ENCODE measurements at regions of chr17 and their contacts with region 1.

Region 1: GRCh38 chr17:45405250-45406086 is 27.2 kb downstream of the ARHGAP27 start:
- DNase-seq: peak in 1 of 3 donors; percentile 19
- ATAC-seq: peak; percentile 3 to 29 (median 15)
- H3K4me3 ChIP-seq: no peak overlapping the region
- H3K27ac ChIP-seq: no peak overlapping the region
- H3K4me1 ChIP-seq: no peaks in the 10 kb centered on the region
- H3K27me3 ChIP-seq: no peaks in the 10 kb centered on the region
- CTCF ChIP-seq: no peak
- POLR2A ChIP-seq: no peak

Region 2: GRCh38 chr17:45702666-45703266 is 297.3 kb after region 1 on chr17:
- intact Hi-C with region 1: no loop called
- DNase-seq: no peak
- ATAC-seq: no peak
- H3K4me3 ChIP-seq: no peak overlapping the region
- H3K27ac ChIP-seq: no peak overlapping the region
- H3K4me1 ChIP-seq: no peaks in the 10 kb centered on the region
- H3K27me3 ChIP-seq: no peaks in the 10 kb centered on the region
- CTCF ChIP-seq: no peak
- POLR2A ChIP-seq: no peak

Region 3: DNA sequence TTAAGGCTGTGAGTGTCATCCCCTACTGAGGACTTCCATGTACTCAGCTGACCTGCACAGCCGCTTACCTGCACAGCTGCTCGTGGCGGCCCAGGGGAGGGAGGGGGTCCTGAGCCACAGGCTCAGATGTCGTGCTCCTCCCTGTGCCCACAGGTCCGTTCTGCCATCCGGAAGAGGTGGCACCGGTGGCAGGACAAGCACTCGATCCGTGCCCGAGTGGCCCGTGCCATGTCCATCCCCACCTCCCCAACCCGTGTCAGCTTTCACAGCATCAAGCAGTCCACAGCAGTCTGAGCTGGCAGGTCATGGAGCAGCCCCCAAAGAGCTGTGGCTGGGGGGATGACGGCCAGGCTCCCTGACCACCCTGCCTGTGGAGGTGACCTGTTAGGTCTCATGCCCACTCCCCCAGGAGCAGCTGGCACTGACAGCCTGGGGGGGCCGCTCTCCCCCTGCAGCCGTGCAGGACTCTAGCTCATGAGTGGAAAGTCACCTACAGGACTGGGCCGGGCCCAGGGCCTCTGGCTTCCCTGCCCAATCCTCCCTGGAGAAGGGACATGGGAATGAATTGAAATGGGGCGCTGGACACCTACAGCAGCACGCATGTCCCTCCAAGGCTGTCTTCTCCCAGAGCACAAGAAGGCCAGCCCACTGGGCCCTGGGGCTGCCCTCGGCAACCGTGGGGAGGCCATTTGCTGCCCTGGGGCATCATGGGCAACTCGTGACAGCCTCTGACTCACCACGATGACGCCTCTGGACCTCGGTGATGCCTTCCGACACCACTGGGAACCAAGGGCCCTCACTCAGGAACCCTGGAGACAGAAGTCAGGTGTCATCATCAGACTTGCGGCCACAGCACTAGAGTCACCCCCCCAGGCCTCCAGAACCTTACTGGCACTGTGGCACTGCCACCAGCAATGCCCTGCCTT is 429.3 kb after region 1 on chr17:
- intact Hi-C with region 1: loop called in 1 of 2 experiments (anchors 10 kb)
- DNase-seq: no peak
- ATAC-seq: no peak
- H3K4me3 ChIP-seq: no peak overlapping the region
- H3K27ac ChIP-seq: no peak overlapping the region
- H3K4me1 ChIP-seq: no peaks in the 10 kb centered on the region
- H3K27me3 ChIP-seq: no peaks in the 10 kb centered on the region
- CTCF ChIP-seq: no peak
- POLR2A ChIP-seq: no peak